ENCODE measurements at regions of chr2 and their contacts with region 1.

Region 1: DNA sequence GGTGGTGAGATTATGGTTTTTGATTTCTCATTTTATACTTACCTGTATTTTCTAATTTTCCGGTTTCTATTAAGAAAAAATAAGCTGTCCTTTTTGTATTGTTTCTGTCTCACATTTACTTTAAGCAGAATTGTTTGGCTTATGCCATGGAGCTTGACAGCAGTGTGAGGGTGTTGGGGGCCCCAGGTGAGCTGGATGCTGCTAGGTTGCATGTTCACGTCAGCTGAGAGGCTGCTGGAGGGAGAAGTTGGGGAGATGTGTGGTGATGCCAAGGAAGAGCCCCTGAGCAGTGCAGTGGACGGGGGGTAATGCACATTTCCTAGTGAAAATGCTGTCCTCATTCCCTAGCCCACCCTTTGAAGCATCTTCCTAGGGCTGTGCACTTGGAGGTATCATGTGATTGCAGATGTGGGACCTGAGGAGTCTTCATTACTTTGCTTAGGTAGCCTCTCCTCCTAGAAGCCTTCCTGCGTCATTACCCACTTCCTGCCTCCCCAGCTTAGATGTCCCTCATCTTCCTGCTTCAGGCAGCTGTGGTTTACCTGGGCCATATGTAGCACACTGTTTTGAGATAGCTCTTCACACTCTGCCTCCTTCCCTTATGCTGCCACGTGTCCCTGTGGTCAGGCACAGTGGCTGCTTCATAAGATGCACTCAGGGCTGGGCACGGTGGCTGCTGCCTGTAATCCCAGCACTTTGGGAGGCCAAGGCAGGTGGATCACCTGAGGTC is 16.2 kb downstream of the ATG16L1 start:
- DNase-seq: peak; percentile 92
- H3K4me3 Mint-ChIP-seq: peak overlapping the region; percentile 63
- H3K27ac Mint-ChIP-seq: peak overlapping the region; percentile 97
- H3K4me1 Mint-ChIP-seq: peaks cover 74% of the 10 kb centered on the region
- H3K27me3 Mint-ChIP-seq: no peaks in the 10 kb centered on the region

Region 2: GRCh38 chr2:233084488-233084887 is 183.2 kb before region 1 on chr2:
- CTCF ChIA-PET with region 1: interaction called, 3 read pairs
- POLR2A ChIA-PET with region 1: interaction called, 24 read pairs
- DNase-seq: peak; percentile 81
- H3K4me3 Mint-ChIP-seq: peak overlapping the region; percentile 73
- H3K27ac Mint-ChIP-seq: peak overlapping the region; percentile 97
- H3K4me1 Mint-ChIP-seq: peaks cover 87% of the 10 kb centered on the region
- H3K27me3 Mint-ChIP-seq: no peaks in the 10 kb centered on the region

Region 3: GRCh38 chr2:233278921-233279320 is 11.2 kb after region 1 on chr2:
- CTCF ChIA-PET with region 1: interaction called, 5 read pairs
- POLR2A ChIA-PET with region 1: interaction called, 17 read pairs
- DNase-seq: no peak
- H3K4me3 Mint-ChIP-seq: no peak overlapping the region
- H3K27ac Mint-ChIP-seq: no peak overlapping the region
- H3K4me1 Mint-ChIP-seq: peaks cover 12% of the 10 kb centered on the region
- H3K27me3 Mint-ChIP-seq: no peaks in the 10 kb centered on the region

Region 4: DNA sequence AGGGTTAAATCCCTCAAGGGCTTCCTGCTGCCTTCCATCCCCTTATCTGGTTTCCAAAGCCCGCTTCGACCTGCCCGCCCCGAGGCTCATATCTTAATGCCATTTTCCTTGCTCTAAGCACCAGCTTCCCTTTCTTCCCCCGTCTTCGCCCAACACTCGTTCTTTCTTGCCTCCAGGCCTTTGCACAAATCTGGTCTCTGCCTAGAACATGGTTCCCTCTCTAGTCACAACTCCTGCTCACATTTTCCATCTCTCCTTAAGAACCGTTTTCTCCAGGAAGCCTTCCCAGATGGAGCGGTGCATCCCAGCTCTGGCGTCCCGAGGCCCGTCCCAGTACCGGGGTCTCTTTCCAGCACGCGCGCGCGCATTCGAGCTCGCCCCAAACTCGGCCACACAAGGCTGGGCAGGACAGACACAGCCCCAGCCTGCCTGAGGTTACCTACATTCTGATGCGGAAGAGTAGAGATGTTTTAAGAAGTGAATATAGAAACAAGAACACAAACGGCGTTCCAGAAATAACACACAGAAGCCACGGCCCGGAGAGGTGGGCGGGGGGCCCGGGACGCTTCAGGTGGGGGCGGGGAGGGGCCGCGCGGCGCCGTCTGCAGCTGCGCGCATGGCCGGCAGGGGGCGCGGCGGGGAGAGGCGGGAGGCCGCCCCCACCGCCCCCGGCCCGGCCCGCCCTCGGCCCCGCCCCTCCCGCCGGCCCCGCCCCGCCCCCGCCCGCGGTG is 86.3 kb after region 1 on chr2 and contains the start of gene DGKD:
- CTCF ChIA-PET with region 1: interaction called, 14 read pairs
- POLR2A ChIA-PET with region 1: interaction called, 5 read pairs
- DNase-seq: peak; percentile 77
- H3K4me3 Mint-ChIP-seq: peak within 1 kb of the TSS; percentile 86
- H3K27ac Mint-ChIP-seq: peak within 1 kb of the TSS; percentile 84
- H3K4me1 Mint-ChIP-seq: peaks cover 75% of the 10 kb centered on the region
- H3K27me3 Mint-ChIP-seq: no peaks in the 10 kb centered on the region
- total RNA-seq, gene DGKD: 77.8 to 78.3 TPM